K562 (cell line): ENCODE measurements at regions of chr13 and their contacts with region 1.

Region 1: DNA sequence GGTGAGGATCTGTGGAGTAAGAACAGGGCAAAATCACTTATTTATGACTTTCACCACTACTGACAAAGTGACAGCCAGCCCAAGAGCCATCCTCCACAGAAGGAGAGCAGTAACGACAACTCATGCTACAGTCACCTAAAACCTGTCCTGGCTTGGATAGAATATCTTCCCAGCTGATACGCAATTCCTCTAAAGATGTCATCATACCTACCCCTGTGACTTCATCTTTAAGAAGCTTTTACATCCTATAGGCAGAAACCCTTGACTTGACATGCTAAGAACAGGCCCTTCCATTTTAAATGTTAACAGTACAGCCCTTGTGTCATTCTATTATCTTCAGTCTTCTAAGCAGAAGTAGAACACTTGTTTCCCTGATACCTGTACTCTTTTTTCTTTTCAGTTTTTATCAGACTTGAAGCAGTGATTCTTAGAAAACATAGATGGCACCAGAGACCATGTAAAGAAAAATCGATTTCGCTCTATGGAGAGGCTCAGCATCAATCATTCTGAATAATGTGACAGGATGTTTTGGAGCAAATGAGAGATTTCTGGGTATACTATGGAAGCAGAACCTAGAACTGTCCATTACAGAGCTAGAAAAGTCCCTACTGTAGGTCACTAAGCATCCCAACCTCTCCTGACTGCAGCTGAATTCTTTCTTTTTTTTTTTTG is 20.1 kb downstream of the STOML3 start:
- DNase-seq: no peak
- ATAC-seq: peak; percentile 29; the same call in 1 of the 3 replicates
- H3K4me3 ChIP-seq: no peak overlapping the region
- H3K27ac ChIP-seq: no peak overlapping the region
- H3K4me1 ChIP-seq: no peaks in the 10 kb centered on the region; a peak in 1 of 5 replicates
- H3K27me3 ChIP-seq: no peaks in the 10 kb centered on the region; a peak in 1 of 5 replicates
- CTCF ChIP-seq: peak in 2 of 3 experiments; percentile 25 to 50; a peak in 2 of 6 replicates
- EP300 ChIP-seq: no peak
- POLR2A ChIP-seq: no peak
- RAD21 ChIP-seq: peak; percentile 40 to 68

Region 2: GRCh38 chr13:39016787-39017186 is 46.3 kb after region 1 on chr13:
- CTCF ChIA-PET with region 1: no interaction called
- POLR2A ChIA-PET with region 1: no interaction called
- in situ Hi-C with region 1: no loop called
- intact Hi-C with region 1: loop called (anchors 2 kb)
- DNase-seq: peak; percentile 14 to 36 (median 20)
- ATAC-seq: peak; percentile 76
- H3K4me3 ChIP-seq: no peak overlapping the region
- H3K27ac ChIP-seq: no peak overlapping the region
- H3K4me1 ChIP-seq: no peaks in the 10 kb centered on the region
- H3K27me3 ChIP-seq: no peaks in the 10 kb centered on the region
- CTCF ChIP-seq: peak; percentile 33 to 57 (median 39); a peak in 3 of 6 replicates
- EP300 ChIP-seq: no peak
- POLR2A ChIP-seq: no peak
- RAD21 ChIP-seq: peak; percentile 41 to 58

Region 3: GRCh38 chr13:39602614-39603366 is 632.3 kb after region 1 on chr13 and contains the start of gene LHFPL6:
- CTCF ChIA-PET with region 1: no interaction called
- POLR2A ChIA-PET with region 1: no interaction called
- in situ Hi-C with region 1: loop called (anchors 25 kb)
- intact Hi-C with region 1: no loop called
- DNase-seq: peak in 3 of 4 experiments; percentile 1 to 8 (median 7)
- ATAC-seq: 0 out of 3 replicates have a peak, but pooled peaks have one; percentile 56
- H3K4me3 ChIP-seq: no peak within 1 kb of the TSS
- H3K27ac ChIP-seq: no peak within 1 kb of the TSS
- H3K4me1 ChIP-seq: peaks cover 0 to 9% of the 10 kb centered on the region in 2 experiments; a peak in 2 of 5 replicates
- H3K27me3 ChIP-seq: peaks cover 7 to 15% of the 10 kb centered on the region in 2 experiments; a peak in 4 of 5 replicates
- CTCF ChIP-seq: no peak
- EP300 ChIP-seq: no peak
- POLR2A ChIP-seq: no peak
- RAD21 ChIP-seq: no peak
- polyA plus RNA-seq, gene LHFPL6: not detected